ENCODE measurements at regions of chr19 and their contacts with region 1.

Region 1: DNA sequence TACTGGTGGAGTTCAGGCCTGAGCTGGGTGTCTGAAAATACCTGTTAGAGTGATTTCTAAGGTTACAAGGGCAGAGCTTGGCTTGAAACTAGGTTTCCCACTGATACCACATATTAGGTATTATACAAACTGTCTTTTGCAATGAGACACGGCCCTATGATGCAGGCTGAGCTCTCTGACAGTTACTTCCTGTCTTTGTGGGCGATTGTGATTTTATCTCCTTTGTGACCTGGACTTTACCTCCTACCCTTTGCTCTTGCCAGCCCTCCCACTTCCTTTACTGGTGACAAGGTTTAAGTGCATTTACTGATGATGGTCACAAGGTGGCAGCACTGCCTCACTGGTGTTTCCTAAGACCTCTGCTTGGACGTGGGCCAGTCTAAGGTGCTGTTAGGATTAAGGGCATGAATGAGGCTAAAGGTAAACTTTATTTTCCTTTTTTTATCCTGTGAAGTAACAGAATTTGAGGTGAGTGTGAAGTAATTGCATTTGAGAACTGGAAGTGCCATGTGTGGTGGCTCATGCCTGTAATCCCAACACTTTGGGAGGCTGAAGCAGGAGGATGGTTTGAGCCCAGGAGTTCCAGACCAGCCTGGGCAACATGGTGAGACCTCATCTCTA is 7.7 kb upstream of the CXCL17 start:
- DNase-seq: peak; percentile 61 to 96 (median 74)
- ATAC-seq: peak; percentile 97
- H3K4me3 ChIP-seq: no peak overlapping the region
- H3K4me3 Mint-ChIP-seq: no peak overlapping the region
- H3K27ac ChIP-seq: peak overlapping the region; percentile 68 to 81
- H3K27ac Mint-ChIP-seq: no peak overlapping the region
- H3K4me1 ChIP-seq: peaks cover 22% of the 10 kb centered on the region
- H3K4me1 Mint-ChIP-seq: no peaks in the 10 kb centered on the region
- H3K27me3 ChIP-seq: no peaks in the 10 kb centered on the region
- H3K27me3 Mint-ChIP-seq: no peaks in the 10 kb centered on the region
- CTCF ChIP-seq: peak; percentile 83

Region 2: GRCh38 chr19:42114412-42114811 is 336.0 kb before region 1 on chr19:
- CTCF ChIA-PET with region 1: no interaction called
- POLR2A ChIA-PET with region 1: no interaction called
- intact Hi-C with region 1: no loop called
- DNase-seq: no peak
- ATAC-seq: no peak
- H3K4me3 ChIP-seq: no peak overlapping the region
- H3K4me3 Mint-ChIP-seq: no peak overlapping the region
- H3K27ac ChIP-seq: no peak overlapping the region
- H3K27ac Mint-ChIP-seq: peak overlapping the region; percentile 63
- H3K4me1 ChIP-seq: no peaks in the 10 kb centered on the region
- H3K4me1 Mint-ChIP-seq: no peaks in the 10 kb centered on the region
- H3K27me3 ChIP-seq: no peaks in the 10 kb centered on the region
- H3K27me3 Mint-ChIP-seq: no peaks in the 10 kb centered on the region
- CTCF ChIP-seq: no peak

Region 3: DNA sequence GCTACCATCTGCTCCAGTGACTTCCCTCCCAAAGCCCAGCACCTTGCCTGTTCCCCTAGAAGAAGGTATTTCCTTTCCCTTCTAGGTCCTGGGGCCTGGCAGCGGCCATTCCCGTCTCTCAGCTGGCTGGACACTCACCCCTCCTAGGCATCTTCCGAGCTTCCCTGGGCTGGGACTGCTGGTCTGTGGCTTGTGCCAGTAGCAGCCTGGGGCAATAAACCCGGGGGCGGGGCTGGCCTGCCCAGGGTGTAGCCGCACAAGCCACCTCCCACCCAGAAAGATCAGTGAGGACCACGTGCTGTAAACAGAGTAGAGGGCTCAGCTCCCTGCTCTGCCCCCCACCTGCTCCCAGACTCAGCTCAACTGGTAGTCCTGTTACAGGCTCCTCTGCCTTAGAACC is 38.2 kb before region 1 on chr19:
- CTCF ChIA-PET with region 1: no interaction called
- POLR2A ChIA-PET with region 1: no interaction called
- intact Hi-C with region 1: no loop called
- DNase-seq: no peak
- ATAC-seq: no peak
- H3K4me3 ChIP-seq: no peak overlapping the region
- H3K4me3 Mint-ChIP-seq: no peak overlapping the region
- H3K27ac ChIP-seq: no peak overlapping the region
- H3K27ac Mint-ChIP-seq: no peak overlapping the region
- H3K4me1 ChIP-seq: peaks cover 3% of the 10 kb centered on the region
- H3K4me1 Mint-ChIP-seq: peaks cover 4% of the 10 kb centered on the region
- H3K27me3 ChIP-seq: no peaks in the 10 kb centered on the region
- H3K27me3 Mint-ChIP-seq: no peaks in the 10 kb centered on the region
- CTCF ChIP-seq: no peak

Region 4: DNA sequence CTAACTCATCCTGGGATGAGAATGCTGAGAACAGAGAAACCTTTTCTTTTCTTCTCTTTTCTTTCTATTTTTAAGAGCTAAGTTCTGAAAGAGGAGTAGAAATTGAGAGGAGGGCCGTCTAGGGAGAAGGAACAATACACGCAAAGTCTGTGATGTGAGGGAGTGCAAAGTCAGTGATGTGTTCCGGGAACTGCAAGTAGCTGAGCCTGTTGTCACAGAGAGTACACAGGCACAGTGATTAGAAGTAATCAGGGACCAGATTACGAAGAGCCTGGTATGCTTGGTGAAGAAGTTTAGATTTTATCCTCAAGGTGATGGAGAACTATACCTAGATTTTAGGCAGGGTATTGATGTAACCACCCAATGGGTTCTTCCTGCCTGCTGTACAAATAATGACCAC is 24.3 kb after region 1 on chr19:
- CTCF ChIA-PET with region 1: no interaction called
- POLR2A ChIA-PET with region 1: no interaction called
- intact Hi-C with region 1: no loop called
- DNase-seq: no peak
- ATAC-seq: no peak
- H3K4me3 ChIP-seq: no peak overlapping the region
- H3K4me3 Mint-ChIP-seq: no peak overlapping the region
- H3K27ac ChIP-seq: no peak overlapping the region
- H3K27ac Mint-ChIP-seq: no peak overlapping the region
- H3K4me1 ChIP-seq: peaks cover under 1% of the 10 kb centered on the region
- H3K4me1 Mint-ChIP-seq: no peaks in the 10 kb centered on the region
- H3K27me3 ChIP-seq: no peaks in the 10 kb centered on the region
- H3K27me3 Mint-ChIP-seq: no peaks in the 10 kb centered on the region
- CTCF ChIP-seq: no peak

Region 5: DNA sequence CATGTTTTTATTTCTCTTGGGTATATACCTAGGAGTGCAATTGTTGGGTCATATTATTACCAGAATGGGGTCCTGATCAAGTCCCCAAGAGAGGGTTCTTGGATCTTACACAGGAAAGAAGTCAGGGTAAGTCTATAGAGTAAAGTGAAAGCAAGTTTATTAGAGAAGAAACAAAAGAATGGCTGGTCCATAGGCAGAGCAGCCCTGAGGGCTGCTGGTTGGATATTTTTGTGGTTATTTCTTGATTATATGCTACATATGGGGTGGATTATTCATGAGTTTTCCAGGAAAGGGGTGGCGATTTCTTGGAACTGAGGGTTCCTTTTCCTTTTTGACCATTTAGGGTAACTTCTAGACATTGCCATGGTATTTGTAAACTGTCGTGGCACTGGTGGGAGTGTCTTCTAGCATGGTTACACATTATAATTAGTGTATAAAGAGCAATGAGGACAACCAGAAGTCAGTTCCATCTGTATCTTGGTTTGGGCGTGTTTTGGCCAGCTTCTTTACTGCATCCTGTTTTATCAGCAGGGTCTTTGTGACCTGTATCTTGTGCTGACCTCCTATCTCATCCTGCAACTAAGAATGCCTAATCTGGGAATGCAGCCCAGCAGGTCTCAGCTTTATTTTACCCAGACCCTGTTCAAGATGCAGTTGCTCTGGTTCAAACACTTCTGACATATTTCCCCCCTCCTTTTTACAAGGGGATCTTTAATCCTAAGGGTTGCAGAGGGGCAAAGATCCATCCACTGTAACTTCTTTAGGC is 36.8 kb after region 1 on chr19:
- CTCF ChIA-PET with region 1: no interaction called
- POLR2A ChIA-PET with region 1: no interaction called
- intact Hi-C with region 1: loop called in 1 of 2 experiments (anchors 2 kb)
- DNase-seq: no peak
- ATAC-seq: no peak
- H3K4me3 ChIP-seq: no peak overlapping the region
- H3K4me3 Mint-ChIP-seq: no peak overlapping the region
- H3K27ac ChIP-seq: no peak overlapping the region
- H3K27ac Mint-ChIP-seq: no peak overlapping the region
- H3K4me1 ChIP-seq: no peaks in the 10 kb centered on the region
- H3K4me1 Mint-ChIP-seq: peaks cover 4% of the 10 kb centered on the region
- H3K27me3 ChIP-seq: no peaks in the 10 kb centered on the region
- H3K27me3 Mint-ChIP-seq: no peaks in the 10 kb centered on the region
- CTCF ChIP-seq: no peak

Region 6: DNA sequence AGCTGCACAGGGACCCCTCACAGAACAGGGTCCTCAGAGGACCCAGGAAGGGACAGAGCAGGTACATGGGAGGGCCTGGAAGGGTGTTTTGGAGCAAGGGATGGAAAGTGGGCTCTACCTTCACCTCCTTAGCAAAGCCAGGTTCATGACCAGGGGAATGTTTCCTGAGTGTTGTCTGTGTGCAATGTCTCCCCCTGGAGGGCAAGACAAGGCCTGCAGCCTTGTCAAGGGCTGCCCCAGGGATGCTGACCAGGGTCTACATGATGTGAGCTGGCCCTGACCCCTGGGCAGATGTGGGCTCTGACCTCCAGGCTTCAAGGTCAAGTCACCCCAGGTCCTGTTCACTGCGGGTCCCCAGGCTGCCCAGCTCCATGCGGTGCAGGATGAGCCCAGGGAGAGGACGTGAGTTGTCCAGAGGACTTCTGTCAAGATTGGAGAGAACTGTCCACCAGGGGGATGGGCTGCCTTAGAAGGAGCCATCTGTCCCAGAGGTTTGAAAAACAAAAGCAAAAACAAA is 78.9 kb after region 1 on chr19:
- CTCF ChIA-PET with region 1: interaction called, 29 read pairs
- POLR2A ChIA-PET with region 1: interaction called, 16 read pairs
- intact Hi-C with region 1: loop called (anchors 1 kb)
- DNase-seq: peak; percentile 49 to 84 (median 62)
- ATAC-seq: peak; percentile 85
- H3K4me3 ChIP-seq: peak overlapping the region; percentile 47
- H3K4me3 Mint-ChIP-seq: peak overlapping the region; percentile 72
- H3K27ac ChIP-seq: peak overlapping the region; percentile 26 to 56
- H3K27ac Mint-ChIP-seq: peak overlapping the region; percentile 63
- H3K4me1 ChIP-seq: peaks cover 46% of the 10 kb centered on the region
- H3K4me1 Mint-ChIP-seq: peaks cover 38% of the 10 kb centered on the region
- H3K27me3 ChIP-seq: no peaks in the 10 kb centered on the region
- H3K27me3 Mint-ChIP-seq: no peaks in the 10 kb centered on the region
- CTCF ChIP-seq: peak; percentile 89

Region 7: DNA sequence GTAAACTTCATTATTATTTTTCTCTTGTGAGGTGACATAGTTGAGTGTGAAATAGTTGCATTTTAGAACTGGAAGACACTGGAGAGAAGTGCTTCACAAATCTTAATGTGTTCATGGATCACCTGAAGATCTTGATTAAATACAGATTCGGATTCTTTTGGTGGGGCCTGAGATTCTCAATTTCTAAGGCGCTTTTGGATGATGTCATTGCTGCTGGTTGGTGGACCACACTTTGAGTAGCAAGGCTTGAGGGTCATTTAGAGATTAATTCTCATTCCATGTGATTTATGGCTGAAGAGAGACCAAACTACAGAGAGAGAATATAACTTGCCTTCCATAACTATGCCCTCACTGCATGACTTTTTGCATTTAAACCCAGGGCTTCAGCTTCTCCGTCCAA is 117.1 kb after region 1 on chr19:
- CTCF ChIA-PET with region 1: no interaction called
- POLR2A ChIA-PET with region 1: no interaction called
- intact Hi-C with region 1: loop called in 1 of 2 experiments (anchors 1 kb)
- DNase-seq: no peak
- ATAC-seq: no peak
- H3K4me3 ChIP-seq: no peak overlapping the region
- H3K4me3 Mint-ChIP-seq: no peak overlapping the region
- H3K27ac ChIP-seq: no peak overlapping the region
- H3K27ac Mint-ChIP-seq: no peak overlapping the region
- H3K4me1 ChIP-seq: peaks cover 3% of the 10 kb centered on the region
- H3K4me1 Mint-ChIP-seq: no peaks in the 10 kb centered on the region
- H3K27me3 ChIP-seq: no peaks in the 10 kb centered on the region
- H3K27me3 Mint-ChIP-seq: peaks cover 17% of the 10 kb centered on the region
- CTCF ChIP-seq: no peak

Region 8: GRCh38 chr19:42596391-42597072 is 146.1 kb after region 1 on chr19:
- CTCF ChIA-PET with region 1: interaction called, 8 read pairs
- POLR2A ChIA-PET with region 1: no interaction called
- intact Hi-C with region 1: loop called (anchors 1 kb)
- DNase-seq: peak in 12 of 14 experiments; percentile 17 to 66 (median 24)
- ATAC-seq: no peak
- H3K4me3 ChIP-seq: no peak overlapping the region
- H3K4me3 Mint-ChIP-seq: no peak overlapping the region
- H3K27ac ChIP-seq: no peak overlapping the region
- H3K27ac Mint-ChIP-seq: no peak overlapping the region
- H3K4me1 ChIP-seq: no peaks in the 10 kb centered on the region
- H3K4me1 Mint-ChIP-seq: no peaks in the 10 kb centered on the region
- H3K27me3 ChIP-seq: peaks cover 6 to 7% of the 10 kb centered on the region in 2 experiments
- H3K27me3 Mint-ChIP-seq: peaks cover 27% of the 10 kb centered on the region
- CTCF ChIP-seq: peak; percentile 98